ENCODE measurements at regions of chr13 and their contacts with region 1.

Region 1: GRCh38 chr13:109256866-109257760 is 529.3 kb downstream of the IRS2 start:
- DNase-seq: peak; percentile 91 to 94
- H3K4me3 ChIP-seq: no peak overlapping the region
- H3K4me3 Mint-ChIP-seq: peak overlapping the region; percentile 40
- H3K27ac Mint-ChIP-seq: peak overlapping the region; percentile 94
- H3K4me1 ChIP-seq: peaks cover 66% of the 10 kb centered on the region
- H3K4me1 Mint-ChIP-seq: peaks cover 38% of the 10 kb centered on the region
- H3K27me3 ChIP-seq: no peaks in the 10 kb centered on the region
- H3K27me3 Mint-ChIP-seq: no peaks in the 10 kb centered on the region
- CTCF ChIP-seq: no peak

Region 2: GRCh38 chr13:108096296-108096915 is 1160.7 kb before region 1 on chr13:
- CTCF ChIA-PET with region 1: no interaction called
- POLR2A ChIA-PET with region 1: no interaction called
- intact Hi-C with region 1: no loop called
- DNase-seq: no peak
- H3K4me3 ChIP-seq: no peak overlapping the region
- H3K4me3 Mint-ChIP-seq: no peak overlapping the region
- H3K27ac Mint-ChIP-seq: no peak overlapping the region
- H3K4me1 ChIP-seq: peaks cover 5% of the 10 kb centered on the region; the same call in 1 of the 2 replicates
- H3K4me1 Mint-ChIP-seq: no peaks in the 10 kb centered on the region
- H3K27me3 ChIP-seq: no peaks in the 10 kb centered on the region
- H3K27me3 Mint-ChIP-seq: no peaks in the 10 kb centered on the region
- CTCF ChIP-seq: no peak

Region 3: DNA sequence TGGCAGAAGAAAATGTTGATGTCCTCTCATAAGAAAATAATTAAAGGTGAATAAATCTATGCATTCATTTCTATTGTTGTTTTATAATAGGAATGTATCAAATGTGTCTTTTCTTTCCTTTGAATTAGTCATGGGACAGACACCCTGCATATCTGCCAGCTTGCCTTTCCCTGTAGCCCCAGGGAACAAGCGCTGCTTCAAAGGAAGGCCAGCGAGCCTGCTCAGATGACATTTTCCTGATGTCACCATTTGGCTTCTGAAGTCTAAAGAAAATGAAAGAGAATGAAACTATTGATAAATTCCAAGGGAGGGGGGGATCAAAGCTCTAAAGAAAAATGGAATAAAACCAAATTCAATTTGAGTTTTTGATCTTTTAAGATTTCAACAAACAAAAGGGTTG is 45.5 kb before region 1 on chr13:
- CTCF ChIA-PET with region 1: no interaction called
- POLR2A ChIA-PET with region 1: no interaction called
- intact Hi-C with region 1: loop called (anchors 1 kb)
- DNase-seq: peak; percentile 84 to 86
- H3K4me3 ChIP-seq: no peak overlapping the region
- H3K4me3 Mint-ChIP-seq: peak overlapping the region; percentile 32
- H3K27ac Mint-ChIP-seq: peak overlapping the region; percentile 78
- H3K4me1 ChIP-seq: peaks cover 46% of the 10 kb centered on the region
- H3K4me1 Mint-ChIP-seq: peaks cover 26% of the 10 kb centered on the region
- H3K27me3 ChIP-seq: no peaks in the 10 kb centered on the region
- H3K27me3 Mint-ChIP-seq: no peaks in the 10 kb centered on the region
- CTCF ChIP-seq: no peak

Region 4: GRCh38 chr13:109243311-109243951 is 13.7 kb before region 1 on chr13:
- CTCF ChIA-PET with region 1: no interaction called
- POLR2A ChIA-PET with region 1: no interaction called
- intact Hi-C with region 1: loop called (anchors 1 kb)
- DNase-seq: peak in 1 of 2 experiments; percentile 32
- H3K4me3 ChIP-seq: no peak overlapping the region
- H3K4me3 Mint-ChIP-seq: no peak overlapping the region
- H3K27ac Mint-ChIP-seq: peak overlapping the region; percentile 73
- H3K4me1 ChIP-seq: peaks cover 16% of the 10 kb centered on the region
- H3K4me1 Mint-ChIP-seq: peaks cover 14% of the 10 kb centered on the region
- H3K27me3 ChIP-seq: no peaks in the 10 kb centered on the region
- H3K27me3 Mint-ChIP-seq: no peaks in the 10 kb centered on the region
- CTCF ChIP-seq: no peak

Region 5: GRCh38 chr13:109592770-109593169 is 335.7 kb after region 1 on chr13:
- CTCF ChIA-PET with region 1: no interaction called
- POLR2A ChIA-PET with region 1: no interaction called
- intact Hi-C with region 1: loop called (anchors 5 kb)
- DNase-seq: peak; percentile 30 to 40
- H3K4me3 ChIP-seq: no peak overlapping the region
- H3K4me3 Mint-ChIP-seq: no peak overlapping the region
- H3K27ac Mint-ChIP-seq: no peak overlapping the region
- H3K4me1 ChIP-seq: peaks cover 15% of the 10 kb centered on the region
- H3K4me1 Mint-ChIP-seq: peaks cover 26% of the 10 kb centered on the region
- H3K27me3 ChIP-seq: no peaks in the 10 kb centered on the region
- H3K27me3 Mint-ChIP-seq: no peaks in the 10 kb centered on the region
- CTCF ChIP-seq: no peak